ENCODE measurements at regions of chr3 and their contacts with region 1.

Region 1: DNA sequence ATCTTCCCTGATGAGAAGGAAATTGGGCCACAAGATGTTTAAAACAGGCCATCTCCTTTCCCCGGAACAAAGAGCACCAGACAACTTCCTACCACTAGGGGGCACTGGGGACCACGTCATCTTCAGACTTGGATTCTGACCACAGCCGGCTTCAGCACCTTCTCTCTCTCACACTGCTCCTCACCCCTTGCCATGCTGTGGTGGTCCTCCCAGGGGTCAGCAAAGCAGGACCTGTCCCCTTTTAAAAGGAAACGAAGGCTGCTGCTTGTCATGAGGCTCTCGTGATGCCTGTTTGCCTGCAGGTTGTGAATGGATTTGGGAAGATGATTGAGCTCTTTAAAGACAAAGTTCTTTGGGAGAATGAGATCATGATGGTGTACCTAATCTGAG is 16.2 kb downstream of the RFT1 start:
- DNase-seq: peak; percentile 90
- H3K4me3 Mint-ChIP-seq: no peak overlapping the region
- H3K27ac Mint-ChIP-seq: no peak overlapping the region
- H3K4me1 Mint-ChIP-seq: peaks cover 23% of the 10 kb centered on the region
- H3K27me3 Mint-ChIP-seq: no peaks in the 10 kb centered on the region

Region 2: DNA sequence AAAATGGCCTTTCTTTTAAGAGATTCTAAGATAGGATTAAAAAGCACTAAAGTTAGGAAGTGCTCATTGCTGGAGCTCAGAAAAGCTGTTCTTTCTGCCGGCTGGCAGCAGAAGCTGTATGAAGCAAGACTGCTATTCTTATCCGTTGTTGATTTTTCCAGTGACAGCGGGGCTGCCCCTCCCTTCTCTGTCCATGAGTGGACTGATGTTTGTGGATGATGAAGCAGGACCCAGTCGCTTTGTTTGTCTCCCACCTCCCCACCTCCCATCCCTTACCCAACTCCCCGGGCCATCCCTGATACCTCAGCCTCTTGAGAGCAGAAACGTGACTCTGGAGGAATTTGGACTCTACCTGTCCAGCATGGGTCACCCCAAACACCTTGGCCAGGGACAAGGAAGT is 268.8 kb before region 1 on chr3:
- CTCF ChIA-PET with region 1: no interaction called
- DNase-seq: no peak
- H3K4me3 Mint-ChIP-seq: no peak overlapping the region
- H3K27ac Mint-ChIP-seq: no peak overlapping the region
- H3K4me1 Mint-ChIP-seq: peaks cover 4% of the 10 kb centered on the region
- H3K27me3 Mint-ChIP-seq: no peaks in the 10 kb centered on the region

Region 3: GRCh38 chr3:53103397-53104296 is 10.4 kb before region 1 on chr3:
- CTCF ChIA-PET with region 1: interaction called, 10 read pairs
- DNase-seq: no peak
- H3K4me3 Mint-ChIP-seq: no peak overlapping the region
- H3K27ac Mint-ChIP-seq: peak overlapping the region; percentile 96
- H3K4me1 Mint-ChIP-seq: peaks cover 92% of the 10 kb centered on the region
- H3K27me3 Mint-ChIP-seq: no peaks in the 10 kb centered on the region

Region 4: GRCh38 chr3:53130179-53131061 is 16.4 kb after region 1 on chr3 and contains the start of gene RFT1:
- CTCF ChIA-PET with region 1: interaction called, 29 read pairs
- DNase-seq: peak; percentile 100
- H3K4me3 Mint-ChIP-seq: peak within 1 kb of the TSS; percentile 88
- H3K27ac Mint-ChIP-seq: peak within 1 kb of the TSS; percentile 93
- H3K4me1 Mint-ChIP-seq: peaks cover 31% of the 10 kb centered on the region
- H3K27me3 Mint-ChIP-seq: no peaks in the 10 kb centered on the region

Measured in activated naive CD4-positive, alpha-beta T cell treated with anti-CD3 and anti-CD28 coated beads, Interleukin-2, amount 10 ng/mL, durations not matched to agents 7 days and 5 days (primary cell).